Naive thymus-derived CD4-positive, alpha-beta T cell (primary cell): ENCODE measurements at regions of chr13 and their contacts with region 1.

Region 1: DNA sequence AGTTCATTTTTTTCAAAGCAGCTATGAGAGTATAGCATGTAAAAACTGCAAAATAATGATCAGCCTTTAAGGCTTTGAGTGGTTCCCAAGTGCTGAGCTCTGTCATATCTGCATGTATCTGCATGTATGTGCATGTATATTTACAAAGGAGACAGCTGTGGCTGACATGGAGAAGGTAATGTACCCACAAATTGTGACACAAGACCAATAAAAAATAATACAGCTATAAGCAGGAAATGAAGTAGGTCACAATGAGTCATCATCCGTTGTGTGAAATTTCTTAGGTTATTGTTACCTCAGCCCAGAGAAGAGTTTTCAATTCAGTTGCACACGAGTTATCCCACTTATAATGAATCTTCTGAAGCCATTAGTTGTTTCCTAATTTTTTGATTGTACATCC is 60.9 kb upstream of the MED4 start:
- DNase-seq: peak in 7 of 9 donors; percentile 49 to 81 (median 74)
- ATAC-seq: peak; percentile 88
- H3K4me3 ChIP-seq: peak overlapping the region; percentile 34
- H3K4me3 Mint-ChIP-seq: peak overlapping the region; percentile 62 to 83 (median 74)
- H3K27ac ChIP-seq: peak overlapping the region; percentile 75
- H3K27ac Mint-ChIP-seq: peak overlapping the region; percentile 89 to 99 (median 92)
- H3K4me1 ChIP-seq: peaks cover 28 to 64% of the 10 kb centered on the region in 2 donors
- H3K4me1 Mint-ChIP-seq: peaks cover 47 to 89% (median 78%) of the 10 kb centered on the region in 7 donors
- H3K27me3 ChIP-seq: no peaks in the 10 kb centered on the region
- H3K27me3 Mint-ChIP-seq: no peaks in the 10 kb centered on the region

Region 2: GRCh38 chr13:47004027-47004426 is 1151.8 kb before region 1 on chr13:
- CTCF ChIA-PET with region 1: no interaction called
- POLR2A ChIA-PET with region 1: no interaction called
- intact Hi-C with region 1: no loop called
- DNase-seq: no peak
- ATAC-seq: no peak
- H3K4me3 ChIP-seq: no peak overlapping the region
- H3K4me3 Mint-ChIP-seq: no peak overlapping the region
- H3K27ac ChIP-seq: no peak overlapping the region
- H3K27ac Mint-ChIP-seq: no peak overlapping the region
- H3K4me1 ChIP-seq: no peaks in the 10 kb centered on the region
- H3K4me1 Mint-ChIP-seq: no peaks in the 10 kb centered on the region
- H3K27me3 ChIP-seq: no peaks in the 10 kb centered on the region
- H3K27me3 Mint-ChIP-seq: peaks cover 4 to 42% (median 29%) of the 10 kb centered on the region in 5 donors

Region 3: GRCh38 chr13:48144413-48145035 is 11.3 kb before region 1 on chr13:
- CTCF ChIA-PET with region 1: no interaction called
- POLR2A ChIA-PET with region 1: interaction called, 14 read pairs
- intact Hi-C with region 1: no loop called
- DNase-seq: peak in 4 of 9 donors; percentile 27 to 50 (median 30)
- ATAC-seq: peak; percentile 85
- H3K4me3 ChIP-seq: no peak overlapping the region
- H3K4me3 Mint-ChIP-seq: peak overlapping the region in 6 of 10 donors; percentile 9 to 56 (median 28)
- H3K27ac ChIP-seq: peak overlapping the region; percentile 52
- H3K27ac Mint-ChIP-seq: peak overlapping the region in 8 of 9 donors; percentile 56 to 97 (median 92)
- H3K4me1 ChIP-seq: peaks cover 5 to 9% of the 10 kb centered on the region in 2 donors
- H3K4me1 Mint-ChIP-seq: peaks cover 9 to 49% (median 36%) of the 10 kb centered on the region in 7 donors
- H3K27me3 ChIP-seq: no peaks in the 10 kb centered on the region
- H3K27me3 Mint-ChIP-seq: peaks cover 0 to 3% (median 0%) of the 10 kb centered on the region in 5 donors

Region 4: DNA sequence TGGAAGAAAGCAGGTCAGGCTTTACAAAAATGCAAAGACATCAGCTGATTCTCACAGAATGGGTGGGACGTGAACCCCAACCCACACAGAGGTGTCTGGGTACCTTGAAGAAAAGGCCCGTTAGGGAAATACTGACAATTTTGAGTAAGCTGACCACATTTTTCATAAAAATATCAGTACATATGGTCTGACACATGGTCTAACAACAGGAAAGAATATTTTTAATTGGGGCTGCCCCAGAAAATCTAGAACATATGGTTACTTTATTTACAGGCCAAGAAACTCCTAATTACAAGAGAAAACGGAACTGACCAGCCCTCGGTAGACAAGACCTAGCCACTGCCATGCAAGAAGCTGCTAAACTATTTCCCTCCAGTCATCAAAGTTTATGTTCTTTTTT is 28.4 kb after region 1 on chr13:
- CTCF ChIA-PET with region 1: interaction called, 3 read pairs
- POLR2A ChIA-PET with region 1: interaction called, 114 read pairs
- intact Hi-C with region 1: loop called (anchors 1 kb)
- DNase-seq: no peak
- ATAC-seq: no peak
- H3K4me3 ChIP-seq: no peak overlapping the region
- H3K4me3 Mint-ChIP-seq: peak overlapping the region in 9 of 10 donors; percentile 41 to 79 (median 65)
- H3K27ac ChIP-seq: peak overlapping the region; percentile 42
- H3K27ac Mint-ChIP-seq: peak overlapping the region in 8 of 9 donors; percentile 82 to 97 (median 90)
- H3K4me1 ChIP-seq: peaks cover 8 to 58% of the 10 kb centered on the region in 2 donors
- H3K4me1 Mint-ChIP-seq: peaks cover 40 to 81% (median 64%) of the 10 kb centered on the region in 7 donors
- H3K27me3 ChIP-seq: no peaks in the 10 kb centered on the region
- H3K27me3 Mint-ChIP-seq: peaks cover 0 to 10% (median 0%) of the 10 kb centered on the region in 5 donors

Region 5: DNA sequence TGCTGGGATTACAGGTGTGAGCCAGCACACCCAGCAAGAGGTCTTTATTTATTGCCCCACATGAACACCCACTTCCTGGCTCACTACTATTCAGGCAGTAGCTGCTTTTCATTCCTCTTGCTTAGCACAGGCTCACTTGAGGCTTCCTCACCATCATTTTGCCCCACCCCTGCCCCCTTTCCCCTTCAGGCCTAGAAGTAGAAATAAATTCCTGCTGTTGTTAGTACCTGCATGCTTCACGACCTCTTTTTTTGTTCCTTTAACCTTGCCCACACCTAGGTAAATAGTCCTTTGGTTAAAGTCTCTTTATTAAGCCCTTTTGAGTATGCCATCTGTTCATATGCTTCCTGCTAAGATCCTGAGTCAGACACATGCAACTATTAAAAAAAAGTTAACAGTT is 43.7 kb after region 1 on chr13:
- CTCF ChIA-PET with region 1: no interaction called
- POLR2A ChIA-PET with region 1: interaction called, 15 read pairs
- intact Hi-C with region 1: no loop called
- DNase-seq: no peak
- ATAC-seq: no peak
- H3K4me3 ChIP-seq: no peak overlapping the region
- H3K4me3 Mint-ChIP-seq: peak overlapping the region in 6 of 10 donors; percentile 1 to 44 (median 10)
- H3K27ac ChIP-seq: no peak overlapping the region
- H3K27ac Mint-ChIP-seq: peak overlapping the region in 8 of 9 donors; percentile 46 to 82 (median 69)
- H3K4me1 ChIP-seq: peaks cover under 1 to 10% of the 10 kb centered on the region in 2 donors
- H3K4me1 Mint-ChIP-seq: peaks cover 5 to 36% (median 28%) of the 10 kb centered on the region in 7 donors
- H3K27me3 ChIP-seq: no peaks in the 10 kb centered on the region
- H3K27me3 Mint-ChIP-seq: peaks cover 0 to 35% (median 0%) of the 10 kb centered on the region in 5 donors

Region 6: GRCh38 chr13:48334534-48335127 is 178.8 kb after region 1 on chr13:
- CTCF ChIA-PET with region 1: no interaction called
- POLR2A ChIA-PET with region 1: no interaction called
- intact Hi-C with region 1: no loop called
- DNase-seq: peak in 6 of 9 donors; percentile 27 to 64 (median 48)
- ATAC-seq: peak; percentile 79
- H3K4me3 ChIP-seq: no peak overlapping the region
- H3K4me3 Mint-ChIP-seq: no peak overlapping the region
- H3K27ac ChIP-seq: no peak overlapping the region
- H3K27ac Mint-ChIP-seq: no peak overlapping the region
- H3K4me1 ChIP-seq: no peaks in the 10 kb centered on the region
- H3K4me1 Mint-ChIP-seq: peaks cover 0 to 23% (median 5%) of the 10 kb centered on the region in 7 donors
- H3K27me3 ChIP-seq: no peaks in the 10 kb centered on the region
- H3K27me3 Mint-ChIP-seq: no peaks in the 10 kb centered on the region

Region 7: DNA sequence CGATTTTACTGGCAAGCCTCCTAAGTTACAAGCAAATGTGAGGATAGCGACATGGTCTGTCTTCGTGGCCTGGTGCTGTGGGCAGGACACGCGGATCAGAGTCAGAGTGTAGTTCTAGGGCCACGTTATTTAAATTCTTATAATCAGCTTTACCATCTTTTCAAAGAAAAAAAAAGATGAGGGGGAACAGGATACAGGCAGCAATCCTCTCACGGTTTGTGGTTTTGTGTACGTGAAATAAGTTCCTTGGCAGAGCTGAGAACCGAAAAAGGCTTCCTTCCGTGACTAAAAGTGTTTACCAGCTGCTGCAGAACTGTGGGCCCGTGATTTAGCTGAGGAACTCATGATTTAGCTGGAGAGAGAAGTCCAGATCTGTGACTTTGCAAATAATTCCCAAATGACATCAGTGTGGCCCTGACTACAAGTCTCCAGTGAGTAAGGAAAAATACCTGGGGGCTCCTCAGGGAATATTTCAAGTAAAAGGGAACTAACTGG is 349.8 kb after region 1 on chr13:
- CTCF ChIA-PET with region 1: no interaction called
- POLR2A ChIA-PET with region 1: interaction called, 3 read pairs
- intact Hi-C with region 1: loop called in 1 of 2 experiments (anchors 10 kb)
- DNase-seq: peak in 7 of 9 donors; percentile 73 to 88 (median 84)
- ATAC-seq: peak; percentile 85
- H3K4me3 ChIP-seq: peak overlapping the region; percentile 37
- H3K4me3 Mint-ChIP-seq: peak overlapping the region; percentile 51 to 86 (median 76)
- H3K27ac ChIP-seq: peak overlapping the region; percentile 59
- H3K27ac Mint-ChIP-seq: peak overlapping the region; percentile 83 to 98 (median 91)
- H3K4me1 ChIP-seq: peaks cover 34 to 47% of the 10 kb centered on the region in 2 donors
- H3K4me1 Mint-ChIP-seq: peaks cover 47 to 78% (median 61%) of the 10 kb centered on the region in 7 donors
- H3K27me3 ChIP-seq: no peaks in the 10 kb centered on the region
- H3K27me3 Mint-ChIP-seq: peaks cover 0 to 11% (median 0%) of the 10 kb centered on the region in 5 donors

Region 8: DNA sequence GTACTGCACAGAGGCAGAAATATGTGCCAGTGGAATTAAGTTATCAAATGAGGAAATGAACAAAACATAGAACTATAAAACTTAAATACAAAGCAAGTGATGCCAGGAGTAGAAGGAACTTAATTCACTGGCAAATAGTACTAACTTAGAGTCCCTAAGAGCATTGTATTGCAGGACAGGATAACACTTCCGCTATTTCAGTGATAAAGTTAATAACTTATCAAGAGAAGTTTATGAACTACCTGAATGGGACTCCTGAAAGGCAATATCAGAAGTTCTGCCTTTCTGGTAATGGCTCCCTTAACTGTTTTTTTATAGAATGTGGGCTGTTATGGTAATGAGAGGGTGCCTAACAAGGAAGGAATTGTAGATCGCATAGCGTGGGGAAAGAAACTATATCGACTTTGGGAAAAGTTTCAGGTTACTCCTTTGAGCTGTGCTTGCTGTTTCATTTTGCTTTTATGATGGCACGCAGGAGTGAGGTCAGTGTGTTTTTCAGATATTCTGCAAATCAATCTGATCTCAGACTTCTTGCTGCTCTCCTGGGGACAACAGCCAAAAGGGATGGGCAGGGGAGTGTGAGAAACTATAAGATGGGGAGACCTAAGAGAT is 969.0 kb after region 1 on chr13:
- CTCF ChIA-PET with region 1: no interaction called
- POLR2A ChIA-PET with region 1: no interaction called
- intact Hi-C with region 1: no loop called
- DNase-seq: no peak
- ATAC-seq: no peak
- H3K4me3 ChIP-seq: no peak overlapping the region
- H3K4me3 Mint-ChIP-seq: peak overlapping the region in 3 of 10 donors; percentile 4 to 25 (median 5)
- H3K27ac ChIP-seq: no peak overlapping the region
- H3K27ac Mint-ChIP-seq: peak overlapping the region in 8 of 9 donors; percentile 43 to 74 (median 56)
- H3K4me1 ChIP-seq: peaks cover 0 to 11% of the 10 kb centered on the region in 2 donors
- H3K4me1 Mint-ChIP-seq: peaks cover 14 to 58% (median 29%) of the 10 kb centered on the region in 7 donors
- H3K27me3 ChIP-seq: no peaks in the 10 kb centered on the region
- H3K27me3 Mint-ChIP-seq: no peaks in the 10 kb centered on the region